Naive thymus-derived CD4-positive, alpha-beta T cell (primary cell): ENCODE measurements at regions of chr12 and their contacts with region 1.

Region 1: DNA sequence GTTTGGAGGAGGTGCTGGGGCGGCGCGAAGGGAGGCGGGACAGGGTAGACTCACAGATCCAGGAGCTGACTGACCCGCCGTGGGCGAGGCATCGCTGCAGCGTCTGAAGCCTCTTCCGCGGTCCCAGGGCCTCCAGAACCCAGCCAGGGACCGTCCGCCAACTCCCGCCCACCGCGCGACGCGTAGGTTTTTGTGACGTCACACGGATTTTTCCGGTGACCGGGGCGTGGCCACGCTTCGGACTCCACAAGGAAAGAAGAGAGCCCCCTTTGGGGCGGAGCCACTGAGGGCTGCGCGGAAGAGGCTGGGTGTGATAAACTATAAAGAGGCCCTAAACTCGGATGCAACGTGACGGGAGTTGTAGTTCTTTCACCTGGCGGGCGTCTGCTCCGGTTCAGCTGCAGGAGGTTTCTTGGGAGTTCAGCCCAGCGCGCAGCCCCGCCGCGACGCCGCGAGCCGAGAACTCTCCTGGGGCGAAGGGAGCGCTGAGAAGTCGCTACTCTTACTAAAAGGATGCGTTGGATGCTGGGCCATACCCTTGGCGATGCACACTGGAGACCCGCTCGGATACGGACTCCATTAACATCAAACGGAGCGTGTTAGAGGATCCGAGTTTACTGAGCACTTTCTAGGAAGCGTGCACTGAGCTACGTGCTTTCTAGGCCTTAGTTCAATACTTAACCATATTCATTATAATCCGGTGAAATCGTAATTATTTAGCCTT is at the start of gene AMN1:
- DNase-seq: peak; percentile 94 to 100 (median 95)
- ATAC-seq: peak; percentile 94
- H3K4me3 ChIP-seq: peak within 1 kb of the TSS; percentile 84
- H3K4me3 Mint-ChIP-seq: peak within 1 kb of the TSS; percentile 94 to 100 (median 98)
- H3K27ac ChIP-seq: peak within 1 kb of the TSS; percentile 86
- H3K27ac Mint-ChIP-seq: peak within 1 kb of the TSS; percentile 96 to 100 (median 99)
- H3K4me1 ChIP-seq: peaks cover 8 to 18% of the 10 kb centered on the region in 2 donors
- H3K4me1 Mint-ChIP-seq: peaks cover 26 to 79% (median 61%) of the 10 kb centered on the region in 7 donors
- H3K27me3 ChIP-seq: no peaks in the 10 kb centered on the region
- H3K27me3 Mint-ChIP-seq: peaks cover 0 to 2% (median 0%) of the 10 kb centered on the region in 5 donors
- total RNA-seq, gene AMN1: 4.1 to 22.9 (median 8.1) TPM

Region 2: GRCh38 chr12:31362759-31363415 is 366.2 kb before region 1 on chr12:
- CTCF ChIA-PET with region 1: no interaction called
- POLR2A ChIA-PET with region 1: no interaction called
- intact Hi-C with region 1: no loop called
- DNase-seq: peak in 5 of 9 donors; percentile 4 to 34 (median 17)
- ATAC-seq: peak; percentile 78
- H3K4me3 ChIP-seq: peak overlapping the region; percentile 8
- H3K4me3 Mint-ChIP-seq: peak overlapping the region; percentile 50 to 81 (median 74)
- H3K27ac ChIP-seq: no peak overlapping the region
- H3K27ac Mint-ChIP-seq: peak overlapping the region; percentile 12 to 91 (median 56)
- H3K4me1 ChIP-seq: peaks cover 4 to 11% of the 10 kb centered on the region in 2 donors
- H3K4me1 Mint-ChIP-seq: peaks cover 12 to 27% (median 18%) of the 10 kb centered on the region in 7 donors
- H3K27me3 ChIP-seq: no peaks in the 10 kb centered on the region
- H3K27me3 Mint-ChIP-seq: no peaks in the 10 kb centered on the region

Region 3: GRCh38 chr12:31682136-31682962 is 46.7 kb before region 1 on chr12:
- CTCF ChIA-PET with region 1: no interaction called
- POLR2A ChIA-PET with region 1: interaction called, 3 read pairs
- intact Hi-C with region 1: loop called (anchors 1 to 2 kb)
- DNase-seq: peak; percentile 30 to 72 (median 66)
- ATAC-seq: peak; percentile 96
- H3K4me3 ChIP-seq: no peak overlapping the region
- H3K4me3 Mint-ChIP-seq: peak overlapping the region in 9 of 10 donors; percentile 2 to 74 (median 23)
- H3K27ac ChIP-seq: no peak overlapping the region
- H3K27ac Mint-ChIP-seq: peak overlapping the region; percentile 9 to 97 (median 74)
- H3K4me1 ChIP-seq: peaks cover 0 to 5% of the 10 kb centered on the region in 2 donors
- H3K4me1 Mint-ChIP-seq: peaks cover 5 to 17% (median 11%) of the 10 kb centered on the region in 7 donors
- H3K27me3 ChIP-seq: no peaks in the 10 kb centered on the region
- H3K27me3 Mint-ChIP-seq: no peaks in the 10 kb centered on the region

Region 4: DNA sequence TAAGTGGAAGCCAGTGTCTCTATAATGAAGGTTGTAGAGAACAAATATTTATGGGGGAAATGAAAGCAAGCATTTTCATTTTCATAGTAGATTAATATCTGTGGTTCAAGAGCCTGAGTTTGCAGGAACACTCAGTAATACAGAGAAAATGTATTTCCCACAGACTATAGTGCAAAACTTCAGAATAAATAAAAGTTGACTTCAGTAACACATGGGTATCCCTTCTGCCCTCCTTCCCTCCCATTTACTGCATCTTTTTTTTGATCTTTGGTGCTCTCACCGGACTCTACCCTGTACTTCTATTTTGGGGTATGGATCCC is 75.1 kb after region 1 on chr12:
- CTCF ChIA-PET with region 1: no interaction called
- POLR2A ChIA-PET with region 1: interaction called, 3 read pairs
- intact Hi-C with region 1: loop called in 1 of 2 experiments (anchors 2 kb)
- DNase-seq: no peak
- ATAC-seq: no peak
- H3K4me3 ChIP-seq: peak overlapping the region; percentile 32
- H3K4me3 Mint-ChIP-seq: peak overlapping the region; percentile 33 to 91 (median 82)
- H3K27ac ChIP-seq: no peak overlapping the region
- H3K27ac Mint-ChIP-seq: peak overlapping the region; percentile 58 to 95 (median 88)
- H3K4me1 ChIP-seq: peaks cover 0 to 41% of the 10 kb centered on the region in 2 donors
- H3K4me1 Mint-ChIP-seq: peaks cover 26 to 67% (median 61%) of the 10 kb centered on the region in 7 donors
- H3K27me3 ChIP-seq: no peaks in the 10 kb centered on the region
- H3K27me3 Mint-ChIP-seq: no peaks in the 10 kb centered on the region

Region 5: GRCh38 chr12:31896514-31897039 is 167.5 kb after region 1 on chr12:
- CTCF ChIA-PET with region 1: no interaction called
- POLR2A ChIA-PET with region 1: interaction called, 25 read pairs
- intact Hi-C with region 1: loop called (anchors 1 kb)
- DNase-seq: peak; percentile 35 to 96 (median 92)
- ATAC-seq: peak; percentile 97
- H3K4me3 ChIP-seq: no peak overlapping the region
- H3K4me3 Mint-ChIP-seq: peak overlapping the region; percentile 36 to 92 (median 76)
- H3K27ac ChIP-seq: peak overlapping the region; percentile 86
- H3K27ac Mint-ChIP-seq: peak overlapping the region; percentile 92 to 99 (median 97)
- H3K4me1 ChIP-seq: peaks cover 61% of the 10 kb centered on the region in 2 donors
- H3K4me1 Mint-ChIP-seq: peaks cover 33 to 74% (median 51%) of the 10 kb centered on the region in 7 donors
- H3K27me3 ChIP-seq: no peaks in the 10 kb centered on the region
- H3K27me3 Mint-ChIP-seq: peaks cover 0 to 6% (median 0%) of the 10 kb centered on the region in 5 donors

Region 6: GRCh38 chr12:32106517-32107358 is 377.7 kb after region 1 on chr12 and contains the start of gene BICD1:
- CTCF ChIA-PET with region 1: no interaction called
- POLR2A ChIA-PET with region 1: no interaction called
- intact Hi-C with region 1: loop called (anchors 2 to 5 kb)
- DNase-seq: peak; percentile 43 to 84 (median 65)
- ATAC-seq: peak; percentile 90
- H3K4me3 ChIP-seq: peak within 1 kb of the TSS; percentile 90
- H3K4me3 Mint-ChIP-seq: peak within 1 kb of the TSS; percentile 82 to 98 (median 96)
- H3K27ac ChIP-seq: peak within 1 kb of the TSS; percentile 67
- H3K27ac Mint-ChIP-seq: peak within 1 kb of the TSS; percentile 77 to 94 (median 91)
- H3K4me1 ChIP-seq: peaks cover 19 to 22% of the 10 kb centered on the region in 2 donors
- H3K4me1 Mint-ChIP-seq: peaks cover 11 to 42% (median 33%) of the 10 kb centered on the region in 7 donors
- H3K27me3 ChIP-seq: no peaks in the 10 kb centered on the region
- H3K27me3 Mint-ChIP-seq: peaks cover 0 to 13% (median 0%) of the 10 kb centered on the region in 5 donors
- total RNA-seq, gene BICD1: 16.7 to 25.1 (median 18.5) TPM